ENCODE measurements at regions of chr2 and their contacts with region 1.

Region 1: GRCh38 chr2:226791487-226792081 is 8.0 kb downstream of the IRS1 start:
- DNase-seq: peak; percentile 92 to 97
- H3K4me3 ChIP-seq: peak overlapping the region; percentile 61 to 85 (median 64)
- H3K27ac ChIP-seq: peak overlapping the region; percentile 94 to 97 (median 96)
- H3K4me1 ChIP-seq: peaks cover 21 to 75% (median 53%) of the 10 kb centered on the region in 4 donors
- H3K27me3 ChIP-seq: no peaks in the 10 kb centered on the region
- CTCF ChIP-seq: peak in 5 of 7 experiments; percentile 5 to 79 (median 65)
- EP300 ChIP-seq: no peak
- POLR2A ChIP-seq: no peak

Region 2: DNA sequence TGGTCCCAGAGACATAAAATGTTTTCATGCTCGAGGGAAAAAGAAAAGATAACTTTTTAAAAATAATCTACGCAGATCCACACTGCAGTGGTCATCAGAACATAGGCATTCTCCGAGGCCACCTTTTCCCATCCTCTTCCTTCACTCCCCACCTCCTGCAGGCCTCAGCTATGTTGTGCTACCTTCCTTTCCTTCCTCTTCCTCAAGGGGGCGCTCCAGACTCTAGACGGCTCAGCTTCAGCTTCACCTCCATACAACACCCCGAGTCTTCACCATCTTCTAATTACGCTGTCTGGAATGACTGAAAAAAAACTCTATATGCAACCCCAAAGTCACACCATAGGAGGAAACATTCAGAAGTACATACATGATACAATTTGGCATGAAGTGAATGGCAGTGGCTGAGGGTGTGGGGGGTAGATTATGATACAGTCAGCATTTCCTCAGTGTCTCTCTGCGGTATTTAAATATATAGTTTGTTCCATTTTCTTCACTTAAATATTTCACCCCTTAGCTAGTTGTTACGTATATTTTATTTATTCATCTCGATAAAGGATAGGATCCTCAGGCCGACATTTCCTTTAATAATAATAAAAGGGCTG is 575.6 kb before region 1 on chr2:
- intact Hi-C with region 1: loop called (anchors 10 kb)
- DNase-seq: peak; percentile 77 to 80
- H3K4me3 ChIP-seq: no peak overlapping the region
- H3K27ac ChIP-seq: no peak overlapping the region
- H3K4me1 ChIP-seq: peaks cover 0 to 9% (median 0%) of the 10 kb centered on the region in 4 donors
- H3K27me3 ChIP-seq: no peaks in the 10 kb centered on the region
- CTCF ChIP-seq: peak in 5 of 7 experiments; percentile 50 to 67 (median 59)
- EP300 ChIP-seq: no peak
- POLR2A ChIP-seq: no peak

Region 3: GRCh38 chr2:226578879-226579278 is 212.7 kb before region 1 on chr2:
- intact Hi-C with region 1: no loop called
- DNase-seq: no peak
- H3K4me3 ChIP-seq: no peak overlapping the region
- H3K27ac ChIP-seq: no peak overlapping the region
- H3K4me1 ChIP-seq: peaks cover 0 to 4% (median 0%) of the 10 kb centered on the region in 4 donors
- H3K27me3 ChIP-seq: no peaks in the 10 kb centered on the region
- CTCF ChIP-seq: no peak
- EP300 ChIP-seq: no peak
- POLR2A ChIP-seq: no peak

Measured in stomach (tissue), 19 donors.